Endothelial cell of umbilical vein (primary cell): ENCODE measurements at regions of chr19 and their contacts with region 1.

Region 1: GRCh38 chr19:10380313-10381102 is at the start of gene TYK2:
- DNase-seq: peak; percentile 99
- H3K4me3 ChIP-seq: peak within 1 kb of the TSS; percentile 78 to 96 (median 89)
- H3K27ac ChIP-seq: peak within 1 kb of the TSS; percentile 10
- H3K4me1 ChIP-seq: peaks cover 12% of the 10 kb centered on the region
- H3K27me3 ChIP-seq: no peaks in the 10 kb centered on the region
- CTCF ChIP-seq: no peak
- POLR2A ChIP-seq: peak; percentile 90
- total RNA-seq, gene TYK2: 138 and 142 TPM in 2 replicates

Region 2: DNA sequence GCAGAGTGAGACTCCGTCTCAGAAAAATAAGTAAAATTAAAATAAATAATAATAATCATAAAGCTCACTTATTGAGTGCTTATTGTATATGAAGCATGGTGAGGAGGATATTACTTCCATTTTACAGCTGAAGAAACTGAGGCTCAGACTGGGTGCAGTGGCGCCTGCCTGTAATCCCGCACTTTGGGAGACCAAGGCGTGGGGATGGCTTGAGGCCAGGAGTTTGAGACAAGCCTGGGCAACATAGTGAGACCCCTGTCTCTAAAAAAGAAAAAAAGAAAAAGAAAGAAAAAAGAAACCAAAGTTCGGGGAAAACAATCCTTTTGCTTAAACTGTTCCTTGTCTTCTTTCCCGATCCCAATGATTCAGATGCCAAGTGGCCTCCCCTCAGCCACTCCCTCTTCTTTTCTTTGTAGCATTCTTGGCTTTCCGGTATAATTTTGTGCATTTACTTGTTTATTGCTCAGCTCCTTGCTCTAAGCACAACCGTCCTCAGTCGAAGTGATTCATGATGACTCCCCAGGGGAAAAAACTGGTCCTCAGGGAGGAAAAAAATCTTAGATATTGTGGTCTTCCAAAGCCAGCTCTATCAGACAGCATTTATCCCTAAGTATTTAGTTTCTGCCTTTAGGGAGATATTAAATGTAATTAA is 259.8 kb before region 1 on chr19:
- CTCF ChIA-PET with region 1: no interaction called
- POLR2A ChIA-PET with region 1: no interaction called
- dilution Hi-C with region 1: no loop called
- intact Hi-C with region 1: loop called (anchors 5 kb)
- DNase-seq: peak; percentile 40
- H3K4me3 ChIP-seq: no peak overlapping the region
- H3K27ac ChIP-seq: no peak overlapping the region
- H3K4me1 ChIP-seq: peaks cover 11% of the 10 kb centered on the region
- H3K27me3 ChIP-seq: no peaks in the 10 kb centered on the region
- CTCF ChIP-seq: no peak
- POLR2A ChIP-seq: no peak

Region 3: GRCh38 chr19:10363789-10364281 is 16.7 kb before region 1 on chr19:
- CTCF ChIA-PET with region 1: no interaction called
- POLR2A ChIA-PET with region 1: no interaction called
- dilution Hi-C with region 1: no loop called
- intact Hi-C with region 1: no loop called
- DNase-seq: no peak
- H3K4me3 ChIP-seq: no peak overlapping the region
- H3K27ac ChIP-seq: no peak overlapping the region
- H3K4me1 ChIP-seq: no peaks in the 10 kb centered on the region
- H3K27me3 ChIP-seq: no peaks in the 10 kb centered on the region
- CTCF ChIP-seq: no peak
- POLR2A ChIP-seq: no peak

Region 4: DNA sequence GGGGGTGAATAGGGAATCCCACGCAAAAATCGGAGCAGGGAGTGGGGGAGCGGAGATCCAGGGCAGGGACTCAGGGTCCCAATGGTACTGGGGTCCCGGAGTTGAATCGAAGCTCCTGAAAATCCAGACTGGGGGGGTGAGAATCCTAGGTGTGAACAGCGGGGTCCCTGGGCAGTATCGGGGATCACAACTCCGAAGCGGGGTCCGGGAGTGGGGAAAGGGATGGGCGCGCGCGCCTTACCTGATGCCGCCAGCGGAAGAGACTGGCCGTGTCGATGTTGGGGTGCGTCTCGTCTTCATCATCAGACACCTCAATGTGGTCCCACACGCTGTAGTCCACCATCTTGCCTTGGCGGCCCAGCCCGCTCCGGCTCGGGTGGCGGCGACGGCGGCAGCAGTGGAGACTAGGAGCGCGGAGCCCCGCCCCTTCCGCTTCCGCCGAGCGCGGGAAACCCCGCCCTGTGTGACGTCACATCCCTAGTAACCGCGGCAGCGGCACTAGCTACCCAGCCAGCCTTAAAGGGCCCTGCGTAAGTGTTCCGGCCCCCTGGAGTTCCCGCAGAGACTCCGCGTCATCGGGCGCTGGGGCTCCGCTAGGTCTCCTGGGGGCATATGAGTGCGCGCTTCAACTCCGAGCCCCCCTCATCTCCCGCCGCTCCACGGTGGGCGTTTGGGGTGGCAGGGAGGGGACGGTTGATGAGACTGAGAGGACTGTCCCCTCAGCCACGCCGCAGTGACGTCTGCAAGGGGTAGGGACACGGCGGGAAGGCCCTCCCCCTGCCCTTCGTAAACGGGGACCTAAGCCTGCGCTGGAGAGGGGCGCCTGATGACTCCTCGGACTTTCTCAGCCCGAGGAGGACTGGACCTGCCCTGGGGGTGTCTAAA is 22.9 kb after region 1 on chr19 and contains the start of gene CDC37:
- CTCF ChIA-PET with region 1: no interaction called
- POLR2A ChIA-PET with region 1: no interaction called
- dilution Hi-C with region 1: no loop called
- intact Hi-C with region 1: no loop called
- DNase-seq: peak; percentile 98
- H3K4me3 ChIP-seq: peak within 1 kb of the TSS; percentile 95 to 98 (median 95)
- H3K27ac ChIP-seq: peak within 1 kb of the TSS; percentile 88
- H3K4me1 ChIP-seq: peaks cover 15% of the 10 kb centered on the region
- H3K27me3 ChIP-seq: peaks cover 12 to 23% of the 10 kb centered on the region in 2 experiments
- CTCF ChIP-seq: no peak
- POLR2A ChIP-seq: peak; percentile 97
- total RNA-seq, gene CDC37: 275 and 300 TPM in 2 replicates

Region 5: DNA sequence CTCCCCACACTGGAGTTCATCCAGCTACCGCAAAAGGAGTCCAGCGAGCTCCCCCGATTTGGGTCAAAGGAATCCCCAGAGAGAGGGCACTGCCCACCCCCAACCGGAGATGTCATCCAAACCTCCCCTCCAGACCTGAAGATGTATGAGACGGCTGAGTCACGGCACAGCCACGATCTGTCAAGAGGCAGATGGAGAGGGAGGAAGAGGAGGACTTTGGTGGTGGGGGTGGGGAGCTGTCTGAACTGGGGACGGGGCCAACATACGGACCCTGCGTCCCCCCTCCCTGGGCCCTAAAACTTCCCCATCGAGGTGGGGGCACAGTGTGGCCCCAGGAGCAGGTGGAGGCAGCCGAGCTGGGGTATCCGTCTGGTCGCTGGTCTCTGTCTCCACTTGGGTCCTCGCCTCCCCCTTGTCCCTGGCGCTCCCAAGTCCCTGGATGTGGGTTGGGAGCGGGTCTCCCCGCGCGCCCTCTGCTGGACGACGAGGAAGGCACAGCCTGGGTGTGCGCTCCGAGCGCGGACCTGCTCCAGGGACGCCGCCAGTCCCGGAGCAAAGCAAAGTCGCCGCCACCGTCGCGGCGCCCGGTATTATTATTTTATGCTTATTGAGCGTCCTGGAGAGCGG is 43.6 kb after region 1 on chr19:
- CTCF ChIA-PET with region 1: no interaction called
- POLR2A ChIA-PET with region 1: no interaction called
- dilution Hi-C with region 1: no loop called
- intact Hi-C with region 1: no loop called
- DNase-seq: peak; percentile 73
- H3K4me3 ChIP-seq: peak overlapping the region in 1 of 3 experiments; percentile 20
- H3K27ac ChIP-seq: no peak overlapping the region
- H3K4me1 ChIP-seq: peaks cover 27% of the 10 kb centered on the region
- H3K27me3 ChIP-seq: peaks cover 24 to 34% of the 10 kb centered on the region in 2 experiments
- CTCF ChIP-seq: peak; percentile 95 to 96
- POLR2A ChIP-seq: no peak